Posterior cingulate gyrus (tissue), 11 donors: ENCODE measurements at regions of chr2 and their contacts with region 1.

Region 1: GRCh38 chr2:68441179-68441993 is 25.7 kb downstream of the FBXO48 start:
- DNase-seq: peak in 9 of 10 donors; percentile 50 to 96 (median 78)

Region 2: DNA sequence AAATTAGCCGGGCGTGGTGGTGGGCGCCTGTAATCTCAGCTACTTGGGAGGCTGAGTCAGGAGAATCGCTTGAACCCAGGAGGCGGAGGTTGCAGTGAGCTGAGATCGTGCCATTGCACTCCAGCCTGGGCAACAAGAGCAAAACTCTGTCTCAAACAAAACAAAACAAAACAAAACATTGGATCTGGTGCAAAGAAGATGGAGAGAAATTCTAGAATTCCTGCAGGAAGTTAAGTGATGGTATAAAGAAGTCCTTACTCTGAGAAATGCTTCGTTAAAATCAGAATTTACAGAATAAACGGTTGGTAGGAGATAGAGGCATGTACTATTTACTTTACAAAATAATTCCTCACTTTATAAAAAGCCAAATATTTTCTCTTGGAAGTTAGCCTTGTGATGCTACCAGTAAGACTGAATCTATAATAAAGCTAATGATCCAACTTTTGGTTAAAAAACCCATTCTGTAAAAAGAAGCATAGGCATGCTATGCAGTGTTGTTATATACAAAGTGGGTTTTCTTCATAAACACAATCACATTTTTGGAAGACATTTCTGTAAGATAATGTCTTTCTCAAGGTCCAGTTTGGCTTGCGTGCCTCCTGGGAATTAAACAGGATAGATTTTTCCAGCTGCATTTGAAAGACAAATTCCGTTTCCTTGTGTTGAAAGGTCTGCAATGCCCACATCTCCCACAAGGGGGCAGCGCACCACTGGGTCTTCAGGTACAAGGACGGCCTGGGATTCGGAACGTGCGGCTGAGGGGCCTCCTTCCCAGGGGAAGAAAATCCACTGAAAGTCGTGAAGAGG is 319.3 kb before region 1 on chr2:
- intact Hi-C with region 1: loop called (anchors 5 kb)
- DNase-seq: peak; percentile 71 to 98 (median 91)

Region 3: DNA sequence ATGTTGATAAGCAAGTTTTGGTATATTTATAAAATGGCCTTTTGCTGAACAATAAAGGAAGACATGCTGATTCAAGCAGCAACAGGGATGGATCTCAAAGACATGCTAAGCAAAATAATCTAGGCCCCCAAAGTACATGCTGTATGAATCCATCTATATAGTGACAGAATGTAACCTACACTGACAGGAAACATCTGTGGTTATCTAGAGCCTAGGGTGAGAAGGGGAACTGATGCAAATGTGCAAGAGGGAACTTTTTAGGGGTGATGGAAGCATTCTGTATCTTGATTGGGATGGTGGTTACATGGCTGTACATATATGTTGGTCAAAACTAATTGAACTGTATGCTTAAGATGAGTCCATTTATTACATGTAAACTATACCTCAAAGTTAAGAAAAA is 145.9 kb before region 1 on chr2:
- intact Hi-C with region 1: loop called (anchors 10 kb)
- DNase-seq: no peak

Region 4: DNA sequence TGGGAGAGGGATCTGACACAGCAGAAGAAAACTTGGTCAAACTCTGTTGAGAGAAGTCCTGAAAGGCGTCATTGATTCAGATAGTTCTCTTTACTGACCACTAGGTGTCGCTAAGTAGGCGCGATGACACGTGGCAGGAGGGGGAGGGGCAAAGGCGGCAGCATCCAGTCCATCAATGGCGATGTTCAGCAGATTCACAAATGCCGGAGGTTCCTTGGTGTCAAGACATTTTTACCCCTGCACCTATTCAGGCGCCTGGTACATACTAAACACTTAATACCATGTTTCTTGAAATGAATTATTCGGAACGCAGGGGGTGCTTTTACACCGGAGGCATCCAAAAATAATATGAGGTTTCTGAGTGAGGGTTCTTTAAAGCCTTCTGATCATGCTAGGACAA is 79.3 kb before region 1 on chr2:
- intact Hi-C with region 1: loop called (anchors 5 kb)
- DNase-seq: peak in 9 of 10 donors; percentile 36 to 88 (median 57)